Activated CD8-positive, alpha-beta T cell treated with anti-CD3 and anti-CD28 coated beads, Interleukin-2, amount 10 ng/mL, durations not matched to agents 7 days and 5 days (primary cell): ENCODE measurements at regions of chr1 and their contacts with region 1.

Region 1: GRCh38 chr1:12161662-12162458 is 4.9 kb upstream of the TNFRSF1B start:
- DNase-seq: peak; percentile 91
- ATAC-seq: peak; percentile 90
- H3K4me3 Mint-ChIP-seq: peak overlapping the region; percentile 58
- H3K27ac Mint-ChIP-seq: peak overlapping the region; percentile 97
- H3K4me1 Mint-ChIP-seq: peaks cover 90% of the 10 kb centered on the region
- H3K27me3 Mint-ChIP-seq: no peaks in the 10 kb centered on the region

Region 2: DNA sequence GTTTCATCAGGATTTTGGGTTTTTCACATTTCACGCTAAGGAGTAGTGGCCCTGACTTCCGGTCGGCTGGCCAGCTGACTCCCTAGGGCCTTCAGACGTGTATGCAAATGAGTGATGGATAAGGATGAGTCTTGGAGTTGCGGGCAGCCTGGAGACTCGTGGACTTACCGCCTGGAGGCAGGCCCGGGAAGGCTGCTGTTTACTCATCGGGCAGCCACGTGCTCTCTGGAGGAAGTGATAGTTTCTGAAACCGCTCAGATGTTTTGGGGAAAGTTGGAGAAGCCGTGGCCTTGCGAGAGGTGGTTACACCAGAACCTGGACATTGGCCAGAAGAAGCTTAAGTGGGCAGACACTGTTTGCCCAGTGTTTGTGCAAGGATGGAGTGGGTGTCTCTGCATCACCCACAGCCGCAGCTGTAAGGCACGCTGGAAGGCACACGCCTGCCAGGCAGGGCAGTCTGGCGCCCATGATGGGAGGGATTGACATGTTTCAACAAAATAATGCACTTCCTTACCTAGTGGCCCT is 18.2 kb before region 1 on chr1:
- CTCF ChIA-PET with region 1: interaction called, 5 read pairs
- POLR2A ChIA-PET with region 1: interaction called, 33 read pairs
- DNase-seq: no peak
- ATAC-seq: no peak
- H3K4me3 Mint-ChIP-seq: no peak overlapping the region
- H3K27ac Mint-ChIP-seq: peak overlapping the region; percentile 76
- H3K4me1 Mint-ChIP-seq: peaks cover 64% of the 10 kb centered on the region
- H3K27me3 Mint-ChIP-seq: no peaks in the 10 kb centered on the region